ENCODE measurements at regions of chr7 and their contacts with region 1.

Region 1: DNA sequence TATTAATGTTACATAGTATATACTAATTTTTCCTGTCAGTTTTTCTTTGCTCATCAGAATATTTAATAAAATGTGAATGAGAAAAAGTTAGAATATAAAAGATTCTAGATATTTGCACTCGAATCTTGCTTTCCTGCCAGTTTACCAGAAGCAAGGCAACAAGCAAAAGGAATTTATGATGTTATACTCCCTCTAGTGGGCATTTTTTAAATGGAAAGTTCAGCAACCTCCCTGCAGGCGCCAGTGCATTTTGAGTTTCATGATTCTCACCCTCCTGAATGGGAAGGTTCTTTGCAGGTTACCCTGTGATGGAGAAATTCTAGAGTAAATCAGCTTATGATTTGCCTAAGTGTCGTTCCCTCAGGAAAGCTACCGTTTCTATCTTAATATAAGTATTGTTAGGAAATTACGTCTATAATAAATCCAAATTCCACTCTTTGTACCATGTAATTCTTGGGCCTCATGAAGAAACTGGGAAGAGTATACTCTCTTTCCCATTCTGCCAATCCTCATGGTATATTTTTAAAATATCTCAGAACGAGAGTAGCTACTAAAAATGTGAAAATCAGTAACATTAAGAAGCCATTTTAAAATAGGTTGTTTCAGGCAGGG is 350.0 kb downstream of the CRPPA start:
- ATAC-seq: peak in 5 of 8 experiments; percentile 41 to 72 (median 57)
- H3K4me3 ChIP-seq: no peak overlapping the region
- H3K27ac ChIP-seq: no peak overlapping the region
- H3K4me1 ChIP-seq: no peaks in the 10 kb centered on the region

Region 2: GRCh38 chr7:14717816-14718215 is 1353.5 kb before region 1 on chr7:
- in situ Hi-C with region 1: loop called in 3 of 9 experiments (anchors 10 to 25 kb)
- ATAC-seq: peak in 3 of 8 experiments; percentile 19 to 32 (median 26)
- H3K4me3 ChIP-seq: no peak overlapping the region
- H3K27ac ChIP-seq: no peak overlapping the region
- H3K4me1 ChIP-seq: no peaks in the 10 kb centered on the region

Region 3: GRCh38 chr7:15326044-15326644 is 745.2 kb before region 1 on chr7:
- in situ Hi-C with region 1: loop called in 4 of 9 experiments (anchors 25 kb)
- ATAC-seq: peak in 1 of 8 experiments; percentile 56
- H3K4me3 ChIP-seq: no peak overlapping the region
- H3K27ac ChIP-seq: no peak overlapping the region
- H3K4me1 ChIP-seq: no peaks in the 10 kb centered on the region

Region 4: DNA sequence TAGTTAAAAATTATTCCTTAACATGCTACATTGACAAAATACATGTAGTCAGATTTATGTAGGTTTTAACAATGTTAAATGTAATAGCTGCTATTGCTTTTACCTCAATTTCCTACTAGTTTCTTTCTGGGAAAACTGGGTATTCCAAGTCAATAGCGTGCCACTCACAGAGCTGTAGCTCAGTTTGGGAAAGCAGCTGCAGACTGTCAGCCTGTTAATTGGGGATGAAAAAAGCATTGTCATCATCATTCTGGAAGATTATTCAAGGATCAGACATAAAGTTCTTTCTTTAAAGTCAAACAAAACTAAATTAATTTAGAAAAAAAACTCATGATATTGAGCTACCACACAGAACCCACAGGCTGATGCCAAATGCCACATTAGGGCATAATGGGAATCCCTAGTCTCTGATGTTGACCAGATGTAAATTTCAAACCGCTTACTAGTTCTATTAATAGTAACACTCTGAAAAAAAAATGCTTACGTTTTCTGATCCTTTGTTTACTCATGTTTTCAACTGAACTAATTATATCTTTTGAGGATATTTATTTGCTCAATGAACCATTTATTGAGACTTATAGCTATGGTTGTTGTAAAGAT is 489.9 kb before region 1 on chr7:
- in situ Hi-C with region 1: loop called in 1 of 9 experiments (anchors 25 kb)
- ATAC-seq: no peak
- H3K4me3 ChIP-seq: no peak overlapping the region
- H3K27ac ChIP-seq: no peak overlapping the region
- H3K4me1 ChIP-seq: no peaks in the 10 kb centered on the region

Region 5: DNA sequence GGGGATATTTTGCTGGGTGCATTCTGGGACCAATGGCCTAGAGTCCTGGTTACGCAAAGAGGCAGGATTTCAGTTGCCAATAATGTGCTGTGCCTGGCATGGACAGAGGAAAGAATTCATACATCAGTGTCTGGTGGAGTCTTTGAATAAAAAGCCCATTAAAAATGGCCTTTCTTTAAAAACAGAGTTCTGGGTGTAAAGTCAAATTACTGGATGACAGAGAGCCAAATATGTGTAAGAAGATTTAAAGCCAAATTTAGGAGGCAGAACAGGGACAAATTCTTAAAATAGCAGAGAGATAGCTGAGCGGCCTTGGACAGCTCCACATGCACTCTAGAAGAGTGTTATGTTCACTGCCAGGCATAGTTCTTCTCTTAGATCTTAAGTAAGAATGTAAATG is 324.1 kb before region 1 on chr7:
- in situ Hi-C with region 1: loop called in 1 of 9 experiments (anchors 25 kb)
- ATAC-seq: no peak
- H3K4me3 ChIP-seq: no peak overlapping the region
- H3K27ac ChIP-seq: no peak overlapping the region
- H3K4me1 ChIP-seq: no peaks in the 10 kb centered on the region

Region 6: DNA sequence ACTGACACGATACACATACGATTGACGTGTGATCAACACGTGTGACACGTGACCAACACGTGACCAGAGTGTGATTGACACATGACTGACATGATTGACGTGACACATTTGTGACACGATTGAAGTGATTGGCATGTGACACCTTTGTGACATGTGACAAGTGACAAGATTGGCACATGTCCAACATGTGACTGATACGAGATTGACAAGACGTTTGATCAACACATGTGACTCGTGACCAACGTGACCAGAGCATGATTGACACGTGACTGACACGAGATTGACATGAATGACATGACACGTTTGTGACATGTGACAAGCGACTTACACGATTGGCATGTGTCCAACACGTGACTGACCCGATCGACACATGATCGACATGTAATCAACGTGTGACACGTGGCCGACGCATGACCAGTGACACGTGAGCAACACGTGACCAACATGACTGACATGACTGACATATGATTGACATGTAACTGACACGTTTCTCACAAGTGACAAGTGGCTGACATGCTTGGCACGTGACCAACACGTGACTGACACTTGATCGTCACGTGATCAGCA is 328.0 kb after region 1 on chr7:
- in situ Hi-C with region 1: no loop called
- ATAC-seq: no peak
- H3K4me3 ChIP-seq: no peak overlapping the region
- H3K27ac ChIP-seq: no peak overlapping the region
- H3K4me1 ChIP-seq: no peaks in the 10 kb centered on the region

Region 7: GRCh38 chr7:16484453-16485158 is 413.3 kb after region 1 on chr7:
- in situ Hi-C with region 1: no loop called
- ATAC-seq: peak in 3 of 8 experiments; percentile 19 to 73 (median 36)
- H3K4me3 ChIP-seq: no peak overlapping the region
- H3K27ac ChIP-seq: no peak overlapping the region
- H3K4me1 ChIP-seq: peaks cover 0 to 2% of the 10 kb centered on the region in 2 donors

Region 8: GRCh38 chr7:16999541-17000267 is 928.4 kb after region 1 on chr7:
- in situ Hi-C with region 1: no loop called
- ATAC-seq: no peak
- H3K4me3 ChIP-seq: no peak overlapping the region
- H3K27ac ChIP-seq: no peak overlapping the region
- H3K4me1 ChIP-seq: no peaks in the 10 kb centered on the region

Measured in motor neuron (in vitro differentiated cells).